Gastrocnemius medialis (tissue), 4 donors: ENCODE measurements at regions of chr19 and their contacts with region 1.

Region 1: GRCh38 chr19:58380722-58381466 is at the start of gene ZNF837:
- DNase-seq: peak; percentile 97 to 100
- ATAC-seq: peak; percentile 96 to 97
- H3K4me3 ChIP-seq: peak within 1 kb of the TSS; percentile 70 to 95 (median 81)
- H3K27ac ChIP-seq: peak within 1 kb of the TSS; percentile 78 to 99 (median 94)
- H3K4me1 ChIP-seq: peaks cover 30 to 36% of the 10 kb centered on the region in 2 donors
- H3K27me3 ChIP-seq: no peaks in the 10 kb centered on the region
- CTCF ChIP-seq: peak in 1 of 5 experiments; percentile 19
- POLR2A ChIP-seq: peak; percentile 82 to 84
- total RNA-seq, gene ZNF837: 0.11 to 0.36 TPM in 2 of 4 donors, not detected in the others

Region 2: GRCh38 chr19:58182989-58183816 is 197.7 kb before region 1 on chr19 and contains the start of gene ZNF274:
- in situ Hi-C with region 1: no loop called
- intact Hi-C with region 1: loop called (anchors 5 kb)
- DNase-seq: peak; percentile 84 to 92
- ATAC-seq: peak; percentile 92 to 95
- H3K4me3 ChIP-seq: peak within 1 kb of the TSS; percentile 82 to 94 (median 92)
- H3K27ac ChIP-seq: peak within 1 kb of the TSS; percentile 92 to 99 (median 98)
- H3K4me1 ChIP-seq: peaks cover 0 to 5% of the 10 kb centered on the region in 2 donors
- H3K27me3 ChIP-seq: no peaks in the 10 kb centered on the region
- CTCF ChIP-seq: no peak
- POLR2A ChIP-seq: peak; percentile 88 to 94
- total RNA-seq, gene ZNF274: 9.0 to 20.7 (median 13.4) TPM

Region 3: DNA sequence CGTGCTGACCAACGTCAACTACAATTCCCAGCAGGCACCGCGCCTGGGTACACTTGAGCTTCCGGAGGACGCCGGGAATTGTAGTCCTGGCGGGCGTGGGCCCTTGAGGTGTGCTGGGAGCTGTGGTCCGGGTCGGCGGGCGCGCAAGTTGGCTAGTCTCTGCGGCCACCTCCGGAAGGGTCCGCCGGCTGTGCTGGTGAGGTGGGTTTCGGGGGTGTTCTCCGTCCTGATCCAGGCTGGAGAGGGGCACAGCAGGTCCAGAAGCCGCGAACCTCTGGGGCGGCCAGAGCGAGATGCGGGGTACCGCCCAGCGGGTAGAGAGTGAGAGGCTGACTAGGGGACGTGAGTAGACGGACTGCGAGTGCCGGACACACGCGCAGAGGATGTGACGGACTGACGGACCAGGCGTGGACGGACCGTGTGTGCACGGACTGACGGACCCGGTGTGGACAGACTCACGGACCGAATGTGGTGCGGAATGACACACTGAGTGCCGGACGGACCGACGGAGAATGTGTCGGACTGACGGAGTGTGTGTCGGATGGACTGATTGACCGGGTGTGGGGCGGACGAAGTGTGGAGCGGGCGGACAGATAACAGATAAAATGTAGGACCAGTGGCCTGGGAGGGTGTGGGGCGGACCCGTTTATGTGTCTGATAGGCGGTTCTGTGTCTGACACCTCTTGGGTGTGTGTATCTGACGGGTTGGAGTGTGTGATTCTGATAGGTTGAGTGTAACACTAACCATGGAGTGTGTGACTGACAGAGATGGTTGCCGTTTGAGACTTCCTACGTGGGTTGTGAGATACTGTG is 53.8 kb before region 1 on chr19 and contains the start of gene ZSCAN22:
- in situ Hi-C with region 1: no loop called
- intact Hi-C with region 1: loop called (anchors 1 kb)
- DNase-seq: peak; percentile 95 to 96
- ATAC-seq: peak; percentile 98
- H3K4me3 ChIP-seq: peak within 1 kb of the TSS; percentile 91 to 96 (median 94)
- H3K27ac ChIP-seq: peak within 1 kb of the TSS; percentile 94 to 99 (median 98)
- H3K4me1 ChIP-seq: peaks cover 24 to 29% of the 10 kb centered on the region in 2 donors
- H3K27me3 ChIP-seq: no peaks in the 10 kb centered on the region
- CTCF ChIP-seq: no peak
- POLR2A ChIP-seq: peak; percentile 79 to 81
- total RNA-seq, gene ZSCAN22: 1.1 to 2.4 (median 1.8) TPM

Region 4: GRCh38 chr19:58362272-58362994 is 18.5 kb before region 1 on chr19 and contains the start of gene ZNF497:
- in situ Hi-C with region 1: no loop called
- intact Hi-C with region 1: loop called (anchors 1 kb)
- DNase-seq: peak; percentile 92 to 93
- ATAC-seq: peak; percentile 94 to 96
- H3K4me3 ChIP-seq: peak within 1 kb of the TSS; percentile 78 to 95 (median 90)
- H3K27ac ChIP-seq: peak within 1 kb of the TSS; percentile 87 to 92 (median 91)
- H3K4me1 ChIP-seq: peaks cover 0 to 8% of the 10 kb centered on the region in 2 donors
- H3K27me3 ChIP-seq: peaks cover 0 to 2% (median 0%) of the 10 kb centered on the region in 3 donors
- CTCF ChIP-seq: peak in 2 of 5 experiments; percentile 2 to 17
- POLR2A ChIP-seq: peak; percentile 61 to 62
- total RNA-seq, gene ZNF497: 0.07 to 0.87 (median 0.36) TPM in 3 of 4 donors, not detected in the other

Region 5: DNA sequence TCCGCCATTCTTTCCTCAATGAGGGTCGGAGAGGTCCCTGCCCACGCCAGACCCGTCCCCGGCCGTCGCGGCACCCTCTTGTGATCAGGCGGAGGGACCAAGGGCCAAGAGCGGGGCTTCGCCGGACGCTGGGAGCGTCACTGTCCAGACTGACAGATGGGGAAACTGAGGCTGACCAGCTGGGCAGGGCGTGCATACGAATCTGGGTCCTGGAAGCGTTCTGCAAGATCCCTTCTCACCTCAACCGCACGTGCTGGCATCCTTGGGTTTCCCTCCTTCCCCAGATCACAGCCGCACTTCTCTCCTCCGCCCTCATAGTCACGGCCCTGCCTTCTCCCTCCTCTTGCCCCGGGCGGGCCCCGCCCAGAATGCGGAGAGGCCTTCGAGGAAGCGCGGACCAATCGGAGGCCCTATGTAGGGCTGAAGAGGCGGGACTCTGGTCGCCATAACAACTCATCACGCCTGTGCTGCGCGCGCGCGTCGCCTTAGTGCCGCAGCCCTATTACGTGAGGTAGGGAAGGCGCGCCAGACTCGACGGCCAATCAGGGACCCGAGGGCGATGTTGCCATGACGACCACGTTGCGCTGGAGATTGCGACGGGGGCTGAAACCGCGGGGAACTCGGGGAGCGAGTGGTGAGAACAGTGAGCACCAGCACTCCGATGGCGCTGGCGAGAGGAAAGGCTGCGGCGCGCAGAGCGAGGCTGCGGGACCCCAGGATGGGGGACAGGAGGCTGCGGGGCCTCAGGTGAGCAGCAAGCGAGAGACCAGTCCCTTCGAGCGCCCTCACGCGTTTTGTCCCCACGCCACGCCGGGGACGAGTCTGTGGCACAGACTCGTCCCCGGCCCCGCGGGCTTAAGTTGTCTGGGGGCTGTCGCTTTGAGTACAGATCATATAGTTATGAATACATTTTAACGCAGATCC is 20.3 kb after region 1 on chr19:
- in situ Hi-C with region 1: no loop called
- intact Hi-C with region 1: loop called (anchors 1 kb)
- DNase-seq: peak; percentile 97 to 99
- ATAC-seq: peak; percentile 100
- H3K4me3 ChIP-seq: peak overlapping the region; percentile 58 to 62 (median 61)
- H3K27ac ChIP-seq: peak overlapping the region; percentile 38 to 68 (median 54)
- H3K4me1 ChIP-seq: peaks cover 8 to 17% of the 10 kb centered on the region in 2 donors
- H3K27me3 ChIP-seq: peaks cover 12 to 18% (median 14%) of the 10 kb centered on the region in 3 donors
- CTCF ChIP-seq: no peak
- POLR2A ChIP-seq: peak in 1 of 2 donors; percentile 32

Region 6: GRCh38 chr19:58519355-58520256 is 138.7 kb after region 1 on chr19 and contains the start of gene ZBTB45:
- in situ Hi-C with region 1: no loop called
- intact Hi-C with region 1: loop called (anchors 1 kb)
- DNase-seq: peak; percentile 86 to 90
- ATAC-seq: peak; percentile 93
- H3K4me3 ChIP-seq: peak within 1 kb of the TSS; percentile 69 to 88 (median 80)
- H3K27ac ChIP-seq: peak within 1 kb of the TSS; percentile 84 to 96 (median 94)
- H3K4me1 ChIP-seq: peaks cover 31 to 36% of the 10 kb centered on the region in 2 donors
- H3K27me3 ChIP-seq: no peaks in the 10 kb centered on the region
- CTCF ChIP-seq: peak; percentile 74 to 92 (median 87)
- POLR2A ChIP-seq: peak; percentile 11 to 34
- total RNA-seq, gene ZBTB45: 5.9 to 12.2 (median 9.6) TPM